ENCODE measurements at regions of chr4 and their contacts with region 1.

Region 1: DNA sequence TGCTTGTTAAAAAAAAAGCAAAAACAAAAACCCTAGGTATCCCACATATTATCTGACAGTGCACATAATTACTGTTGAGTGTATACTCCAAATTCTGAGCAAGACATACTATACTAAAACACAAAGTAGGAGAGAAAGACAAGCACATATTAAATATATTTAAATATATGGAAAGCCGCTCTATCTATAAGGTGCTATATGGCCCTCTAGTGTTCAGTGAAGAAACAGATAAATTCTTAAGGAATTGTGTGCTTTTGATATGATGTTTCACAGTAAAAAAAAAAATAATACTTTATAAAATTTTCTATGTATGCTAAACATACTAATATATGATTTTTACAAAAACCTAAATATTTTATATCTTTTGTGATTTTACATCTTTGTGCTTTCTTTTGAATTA is 137.8 kb downstream of the FBXW7 start:
- DNase-seq: no peak
- H3K4me3 ChIP-seq: no peak overlapping the region
- H3K27ac ChIP-seq: no peak overlapping the region
- H3K4me1 ChIP-seq: no peaks in the 10 kb centered on the region
- H3K27me3 ChIP-seq: no peaks in the 10 kb centered on the region
- CTCF ChIP-seq: peak; percentile 29

Region 2: DNA sequence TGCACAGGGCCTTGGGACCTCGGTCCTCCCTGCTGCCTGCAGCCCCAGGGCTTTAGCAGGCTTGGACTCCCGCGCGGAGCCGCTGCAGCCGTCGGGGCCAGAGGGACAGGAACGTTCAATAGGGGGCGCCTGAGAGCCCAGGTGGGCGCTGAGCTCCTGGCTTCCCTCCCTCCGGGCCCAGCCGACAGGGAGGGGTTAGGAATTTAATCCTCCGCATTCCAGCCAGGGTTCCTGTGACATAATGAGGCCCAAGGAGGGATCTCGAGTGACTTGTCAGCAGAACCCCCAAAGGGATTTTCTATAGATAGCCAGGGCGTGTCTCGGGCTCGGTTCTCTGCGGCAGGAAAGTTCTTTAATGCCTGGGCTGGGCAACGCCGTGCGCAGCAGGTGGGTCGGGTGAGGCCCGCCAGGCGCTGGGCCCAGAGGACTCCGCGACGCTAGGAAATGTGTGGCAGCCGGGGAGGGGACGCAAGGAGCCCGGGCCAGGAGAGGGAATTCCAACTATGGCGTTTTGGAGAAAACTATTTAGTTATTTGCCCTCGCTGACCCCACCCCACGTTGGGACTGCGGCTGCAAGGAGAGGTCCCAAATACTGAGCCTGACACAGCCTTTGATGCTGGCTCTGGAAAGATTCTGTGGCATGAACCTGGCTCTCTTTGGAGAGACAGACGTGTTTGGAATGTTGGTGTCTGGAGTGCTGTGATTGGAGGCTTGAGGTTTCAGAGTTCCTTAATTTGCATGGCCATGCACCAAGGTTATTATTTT is 352.1 kb before region 1 on chr4:
- intact Hi-C with region 1: loop called (anchors 10 kb)
- DNase-seq: peak; percentile 68
- H3K4me3 ChIP-seq: no peak overlapping the region
- H3K27ac ChIP-seq: no peak overlapping the region
- H3K4me1 ChIP-seq: no peaks in the 10 kb centered on the region
- H3K27me3 ChIP-seq: no peaks in the 10 kb centered on the region
- CTCF ChIP-seq: peak; percentile 52